ENCODE measurements at regions of chr12 and their contacts with region 1.

Region 1: DNA sequence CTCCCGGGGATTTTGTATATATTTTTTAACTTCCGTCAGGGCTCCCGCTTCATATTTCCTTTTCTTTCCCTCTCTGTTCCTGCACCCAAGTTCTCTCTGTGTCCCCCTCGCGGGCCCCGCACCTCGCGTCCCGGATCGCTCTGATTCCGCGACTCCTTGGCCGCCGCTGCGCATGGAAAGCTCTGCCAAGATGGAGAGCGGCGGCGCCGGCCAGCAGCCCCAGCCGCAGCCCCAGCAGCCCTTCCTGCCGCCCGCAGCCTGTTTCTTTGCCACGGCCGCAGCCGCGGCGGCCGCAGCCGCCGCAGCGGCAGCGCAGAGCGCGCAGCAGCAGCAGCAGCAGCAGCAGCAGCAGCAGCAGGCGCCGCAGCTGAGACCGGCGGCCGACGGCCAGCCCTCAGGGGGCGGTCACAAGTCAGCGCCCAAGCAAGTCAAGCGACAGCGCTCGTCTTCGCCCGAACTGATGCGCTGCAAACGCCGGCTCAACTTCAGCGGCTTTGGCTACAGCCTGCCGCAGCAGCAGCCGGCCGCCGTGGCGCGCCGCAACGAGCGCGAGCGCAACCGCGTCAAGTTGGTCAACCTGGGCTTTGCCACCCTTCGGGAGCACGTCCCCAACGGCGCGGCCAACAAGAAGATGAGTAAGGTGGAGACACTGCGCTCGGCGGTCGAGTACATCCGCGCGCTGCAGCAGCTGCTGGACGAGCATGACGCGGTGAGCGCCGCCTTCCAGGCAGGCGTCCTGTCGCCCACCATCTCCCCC is 777 bp downstream of the ASCL1 start:
- DNase-seq: peak; percentile 6
- H3K4me3 ChIP-seq: peak overlapping the region; percentile 42
- H3K27ac ChIP-seq: no peak overlapping the region
- H3K27me3 ChIP-seq: peaks cover 61% of the 10 kb centered on the region
- CTCF ChIP-seq: no peak

Region 2: DNA sequence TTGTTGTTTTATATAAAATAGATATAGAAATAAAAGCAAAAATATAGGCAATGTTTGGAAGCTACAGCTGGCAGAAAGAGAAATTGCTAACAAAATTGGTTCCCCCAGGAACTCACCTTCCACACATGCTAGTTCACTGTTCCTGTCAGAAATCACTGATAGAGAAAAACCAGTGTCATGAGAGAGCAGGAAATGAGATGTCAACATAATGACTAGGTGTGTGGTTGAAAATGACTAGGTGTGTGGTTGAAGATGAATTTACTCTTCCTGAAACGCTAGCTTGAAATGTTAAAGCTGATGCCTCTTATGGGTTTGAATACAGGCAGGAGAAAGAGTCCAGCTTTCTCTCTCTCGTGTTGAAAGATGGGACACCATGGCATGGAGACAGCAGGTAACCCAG is 321.2 kb after region 1 on chr12:
- in situ Hi-C with region 1: no loop called
- DNase-seq: no peak
- H3K4me3 ChIP-seq: no peak overlapping the region
- H3K27ac ChIP-seq: no peak overlapping the region
- H3K27me3 ChIP-seq: no peaks in the 10 kb centered on the region
- CTCF ChIP-seq: no peak

Region 3: GRCh38 chr12:103548622-103549601 is 590.7 kb after region 1 on chr12:
- in situ Hi-C with region 1: loop called (anchors 25 kb)
- DNase-seq: peak; percentile 58
- H3K4me3 ChIP-seq: no peak overlapping the region
- H3K27ac ChIP-seq: no peak overlapping the region
- H3K27me3 ChIP-seq: no peaks in the 10 kb centered on the region
- CTCF ChIP-seq: peak; percentile 91

Measured in brain microvascular endothelial cell (primary cell).